Posterior vena cava (tissue), 2 donors: ENCODE measurements at regions of chr18 and their contacts with region 1.

Region 1: GRCh38 chr18:42781298-42781815 is 334.1 kb downstream of the RIT2 start:
- DNase-seq: no peak

Region 2: GRCh38 chr18:41121116-41121826 is 1660.1 kb before region 1 on chr18:
- intact Hi-C with region 1: loop called in 1 of 2 experiments (anchors 10 kb)
- DNase-seq: no peak

Region 3: DNA sequence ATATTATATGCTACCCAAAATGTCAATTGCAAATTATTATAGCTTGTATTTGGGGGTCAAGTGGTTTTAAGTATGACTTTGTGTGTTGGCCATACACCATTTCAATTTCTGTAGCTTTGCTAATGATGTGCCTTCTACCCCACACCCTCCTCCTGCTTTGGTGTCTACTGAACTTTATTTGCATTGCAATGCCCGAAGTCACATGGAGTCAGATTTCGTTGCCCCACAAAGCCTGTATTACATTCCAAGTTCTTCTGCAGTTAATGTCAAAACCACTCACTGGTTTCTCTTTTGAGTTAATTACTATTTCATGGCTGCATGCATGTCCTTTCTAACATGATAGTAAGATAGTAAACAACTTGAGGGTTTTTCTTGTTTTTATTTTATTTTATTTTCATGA is 194.8 kb before region 1 on chr18:
- intact Hi-C with region 1: no loop called
- DNase-seq: no peak